Endothelial cell of umbilical vein (primary cell): ENCODE measurements at regions of chr13 and their contacts with region 1.

Region 1: DNA sequence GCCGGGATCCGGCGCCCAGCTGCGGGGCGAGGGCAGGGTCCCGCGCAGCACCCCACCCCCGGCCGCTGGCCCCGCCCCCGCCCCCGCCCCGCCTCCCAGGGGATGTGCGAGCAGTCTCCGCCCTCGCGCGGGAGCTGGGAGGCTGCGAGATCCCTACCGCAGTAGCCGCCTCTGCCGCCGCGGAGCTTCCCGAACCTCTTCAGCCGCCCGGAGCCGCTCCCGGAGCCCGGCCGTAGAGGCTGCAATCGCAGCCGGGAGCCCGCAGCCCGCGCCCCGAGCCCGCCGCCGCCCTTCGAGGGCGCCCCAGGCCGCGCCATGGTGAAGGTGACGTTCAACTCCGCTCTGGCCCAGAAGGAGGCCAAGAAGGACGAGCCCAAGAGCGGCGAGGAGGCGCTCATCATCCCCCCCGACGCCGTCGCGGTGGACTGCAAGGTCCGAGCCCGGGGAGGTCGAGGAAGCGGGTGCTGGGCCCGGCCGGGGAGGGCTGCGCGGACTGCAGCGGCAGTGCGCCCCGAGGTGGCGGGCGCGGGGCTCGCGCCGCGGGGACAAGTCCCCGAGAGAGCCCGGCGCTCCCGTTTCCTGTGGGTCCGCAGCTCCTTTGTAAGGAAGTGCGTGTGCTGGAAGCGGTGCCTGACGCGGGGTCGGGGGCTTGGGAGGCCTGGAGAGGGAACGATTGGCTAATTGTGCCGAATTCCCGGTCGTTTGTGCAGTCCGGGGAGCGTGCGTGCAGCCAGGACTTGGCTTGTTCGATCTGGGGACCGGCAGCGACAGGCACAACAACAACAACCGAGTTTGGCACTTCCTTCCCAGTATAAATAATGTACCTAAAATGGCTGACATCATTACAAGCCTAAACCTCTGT is at the start of gene ITM2B:
- DNase-seq: peak; percentile 76
- H3K4me3 ChIP-seq: peak within 1 kb of the TSS; percentile 67 to 95 (median 77)
- H3K27ac ChIP-seq: peak within 1 kb of the TSS; percentile 86
- H3K4me1 ChIP-seq: peaks cover 45% of the 10 kb centered on the region
- H3K27me3 ChIP-seq: peaks cover 2 to 4% of the 10 kb centered on the region in 2 experiments
- CTCF ChIP-seq: peak; percentile 34 to 36
- POLR2A ChIP-seq: peak; percentile 55
- total RNA-seq, gene ITM2B: 245 and 271 TPM in 2 replicates

Region 2: GRCh38 chr13:48037346-48038173 is 195.7 kb before region 1 on chr13 and contains the start of gene NUDT15:
- CTCF ChIA-PET with region 1: interaction called, 7 read pairs
- POLR2A ChIA-PET with region 1: no interaction called
- dilution Hi-C with region 1: no loop called
- intact Hi-C with region 1: loop called (anchors 1 kb)
- DNase-seq: peak; percentile 96
- H3K4me3 ChIP-seq: peak within 1 kb of the TSS; percentile 54 to 75 (median 72)
- H3K27ac ChIP-seq: peak within 1 kb of the TSS; percentile 82
- H3K4me1 ChIP-seq: peaks cover 16% of the 10 kb centered on the region
- H3K27me3 ChIP-seq: no peaks in the 10 kb centered on the region
- CTCF ChIP-seq: peak; percentile 100
- POLR2A ChIP-seq: peak; percentile 95
- total RNA-seq, gene NUDT15: 20.6 and 21.6 TPM in 2 replicates

Region 3: DNA sequence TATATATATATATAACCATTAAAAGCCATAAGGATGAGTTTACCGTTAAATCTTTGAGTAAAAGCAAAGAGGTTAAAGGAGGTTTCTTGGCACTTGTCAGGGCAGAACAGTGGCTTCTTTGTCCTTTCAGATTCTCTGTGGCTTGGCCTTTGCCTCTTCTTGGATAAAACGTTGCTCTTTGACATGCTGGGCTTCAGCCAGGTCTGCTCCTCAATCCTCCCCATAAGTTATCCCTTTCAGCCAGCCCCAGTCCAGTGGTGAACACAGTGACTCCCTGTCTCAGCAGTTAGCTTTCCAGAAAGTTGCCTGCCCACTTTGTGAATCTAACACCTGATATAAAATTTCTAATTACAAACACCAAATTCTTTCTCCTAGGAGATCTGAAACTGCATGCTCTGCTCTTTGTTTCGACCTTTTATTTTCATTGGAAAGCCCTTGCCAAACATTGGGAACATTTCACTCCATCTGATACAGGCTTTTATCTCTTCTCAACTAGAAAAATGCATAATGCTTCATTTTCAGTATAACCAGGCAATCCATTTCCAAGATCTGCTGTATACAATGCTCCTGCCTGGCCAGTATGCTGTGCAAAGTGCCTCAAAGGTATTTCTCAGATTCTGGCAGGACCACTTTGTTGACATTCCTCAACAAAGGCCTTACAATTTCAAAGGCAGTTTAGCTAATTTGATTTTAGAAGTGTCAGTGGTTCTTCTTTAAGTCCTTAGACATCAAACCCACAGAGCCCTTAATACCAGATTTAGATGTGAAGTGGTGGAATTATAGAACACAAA is 122.2 kb before region 1 on chr13:
- CTCF ChIA-PET with region 1: interaction called, 3 read pairs
- POLR2A ChIA-PET with region 1: interaction called, 5 read pairs
- dilution Hi-C with region 1: no loop called
- intact Hi-C with region 1: loop called (anchors 2 kb)
- DNase-seq: peak; percentile 56
- H3K4me3 ChIP-seq: no peak overlapping the region
- H3K27ac ChIP-seq: peak overlapping the region; percentile 53
- H3K4me1 ChIP-seq: peaks cover 26% of the 10 kb centered on the region
- H3K27me3 ChIP-seq: peaks cover under 1 to 5% of the 10 kb centered on the region in 2 experiments
- CTCF ChIP-seq: no peak
- POLR2A ChIP-seq: no peak

Region 4: DNA sequence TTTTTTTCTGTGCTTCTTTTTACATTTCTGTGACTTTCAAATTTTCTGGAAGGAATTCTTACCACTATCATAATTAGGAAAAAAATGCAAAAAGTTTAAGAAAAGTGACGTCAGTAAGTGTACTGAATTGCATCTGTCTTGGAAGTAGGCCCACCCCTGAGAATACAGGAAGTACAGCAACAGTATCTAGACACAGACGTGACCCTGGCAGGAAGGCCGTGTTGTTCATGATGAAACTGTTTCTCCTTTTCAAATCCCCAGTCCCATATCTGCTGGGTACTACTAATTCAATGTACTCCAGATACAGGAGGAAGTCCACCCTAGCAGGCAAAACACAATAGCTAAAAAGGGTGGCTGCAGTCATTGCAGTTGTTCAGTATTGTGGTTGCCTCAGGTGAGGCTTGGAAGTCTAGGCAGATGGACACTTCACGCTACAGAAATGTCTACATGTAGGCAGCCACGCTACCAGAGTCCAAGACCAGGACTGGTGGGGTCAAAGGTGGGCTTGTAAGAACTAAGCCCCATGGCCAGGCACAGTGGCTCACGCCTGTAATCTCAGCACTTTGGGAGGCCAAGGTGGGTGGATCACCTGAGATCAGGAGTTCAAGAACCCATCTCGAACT is 88.8 kb before region 1 on chr13:
- CTCF ChIA-PET with region 1: no interaction called
- POLR2A ChIA-PET with region 1: no interaction called
- dilution Hi-C with region 1: no loop called
- intact Hi-C with region 1: loop called (anchors 5 kb)
- DNase-seq: peak; percentile 81
- H3K4me3 ChIP-seq: no peak overlapping the region
- H3K27ac ChIP-seq: peak overlapping the region; percentile 79
- H3K4me1 ChIP-seq: peaks cover 15% of the 10 kb centered on the region
- H3K27me3 ChIP-seq: no peaks in the 10 kb centered on the region
- CTCF ChIP-seq: no peak
- POLR2A ChIP-seq: no peak